ENCODE measurements at regions of chr16 and their contacts with region 1.

Region 1: DNA sequence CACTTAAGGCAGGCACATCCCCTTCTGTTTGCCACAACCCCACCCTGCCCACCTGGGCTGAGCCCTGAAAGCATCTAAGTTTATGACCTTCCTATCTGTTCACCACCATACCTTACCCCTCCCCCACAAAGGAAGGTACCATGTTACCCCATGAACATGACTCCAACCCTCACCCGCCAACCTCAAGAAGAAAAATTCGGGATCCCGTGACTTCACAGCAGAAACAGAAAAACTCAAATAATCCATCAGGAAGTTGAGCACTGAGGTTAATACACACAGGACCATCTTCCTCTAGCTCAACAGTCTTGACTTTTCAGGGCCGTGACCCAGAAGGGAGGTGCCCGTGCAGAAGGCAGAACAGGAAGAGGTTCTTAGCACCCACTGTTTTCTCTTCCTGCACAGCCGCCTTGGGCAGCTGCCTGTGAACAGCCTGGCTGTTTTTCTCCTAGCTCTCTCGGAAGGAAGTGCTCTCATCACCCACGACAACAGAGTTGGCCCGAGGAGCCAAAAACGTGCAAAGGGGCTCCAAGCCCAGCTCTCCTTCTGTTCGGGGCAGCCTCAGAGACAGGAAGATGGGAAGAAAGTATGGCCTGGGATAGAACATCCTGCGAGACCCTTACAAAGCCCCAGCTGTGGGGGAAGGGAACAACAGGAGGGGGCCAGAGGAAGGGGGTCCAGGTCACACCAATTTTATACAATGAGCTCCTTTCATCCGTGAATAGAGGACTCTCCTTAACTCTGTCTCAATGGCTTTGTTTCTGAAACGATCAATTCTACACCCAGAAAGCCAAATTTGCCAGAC is 101.1 kb downstream of the XYLT1 start:
- DNase-seq: no peak
- H3K4me3 ChIP-seq: no peak overlapping the region
- CTCF ChIP-seq: no peak

Region 2: GRCh38 chr16:17277977-17278381 is 91.6 kb before region 1 on chr16:
- in situ Hi-C with region 1: loop called (anchors 5 kb)
- DNase-seq: no peak
- H3K4me3 ChIP-seq: no peak overlapping the region
- CTCF ChIP-seq: peak; percentile 56

Region 3: DNA sequence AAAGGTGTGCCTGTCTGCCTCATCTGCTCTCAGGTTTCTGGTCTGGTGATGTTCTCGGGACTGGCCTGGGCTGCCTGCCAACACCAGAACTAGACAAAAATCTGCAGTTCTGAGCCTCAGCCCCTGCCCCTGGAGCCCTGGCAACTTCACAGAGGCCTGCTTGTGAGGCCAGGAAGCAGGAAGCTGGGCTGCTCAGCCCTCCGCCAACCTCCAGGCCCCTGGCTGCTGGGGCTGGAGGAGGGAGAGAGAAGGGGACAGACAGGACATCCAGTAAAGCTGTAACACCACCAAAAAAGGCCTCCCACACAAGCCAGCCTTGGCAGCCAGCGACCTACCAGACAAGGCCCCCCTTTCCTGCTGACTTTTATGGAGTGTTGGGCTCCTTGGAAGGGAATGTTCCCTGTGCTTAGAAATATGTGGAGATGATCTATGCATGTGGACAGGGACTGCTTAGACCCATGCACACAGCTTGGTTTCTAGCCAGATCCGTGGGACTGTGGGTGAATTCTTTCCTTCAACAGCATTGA is 56.5 kb before region 1 on chr16:
- in situ Hi-C with region 1: loop called (anchors 10 kb)
- DNase-seq: no peak
- H3K4me3 ChIP-seq: no peak overlapping the region
- CTCF ChIP-seq: no peak

Region 4: GRCh38 chr16:17459530-17460521 is 90.2 kb after region 1 on chr16:
- in situ Hi-C with region 1: no loop called
- DNase-seq: no peak
- H3K4me3 ChIP-seq: no peak overlapping the region
- CTCF ChIP-seq: no peak

Region 5: GRCh38 chr16:17470936-17471718 is 101.5 kb after region 1 on chr16 and contains the start of gene XYLT1:
- in situ Hi-C with region 1: loop called (anchors 5 kb)
- DNase-seq: peak; percentile 60
- H3K4me3 ChIP-seq: peak within 1 kb of the TSS; percentile 65
- CTCF ChIP-seq: no peak

Measured in astrocyte of the cerebellum (primary cell).